Endothelial cell of umbilical vein (primary cell): ENCODE measurements at regions of chr2 and their contacts with region 1.

Region 1: GRCh38 chr2:20452551-20452950 is 5.7 kb downstream of the RHOB start:
- DNase-seq: no peak
- H3K4me3 ChIP-seq: no peak overlapping the region
- H3K27ac ChIP-seq: peak overlapping the region; percentile 76
- H3K4me1 ChIP-seq: no peaks in the 10 kb centered on the region
- H3K27me3 ChIP-seq: no peaks in the 10 kb centered on the region
- CTCF ChIP-seq: peak; percentile 29 to 36
- POLR2A ChIP-seq: no peak

Region 2: GRCh38 chr2:20561701-20562454 is 109.3 kb after region 1 on chr2:
- CTCF ChIA-PET with region 1: interaction called, 15 read pairs
- POLR2A ChIA-PET with region 1: interaction called, 11 read pairs
- dilution Hi-C with region 1: no loop called
- intact Hi-C with region 1: no loop called
- DNase-seq: peak; percentile 58
- H3K4me3 ChIP-seq: no peak overlapping the region
- H3K27ac ChIP-seq: no peak overlapping the region
- H3K4me1 ChIP-seq: peaks cover 12% of the 10 kb centered on the region
- H3K27me3 ChIP-seq: no peaks in the 10 kb centered on the region
- CTCF ChIP-seq: no peak
- POLR2A ChIP-seq: no peak

Region 3: DNA sequence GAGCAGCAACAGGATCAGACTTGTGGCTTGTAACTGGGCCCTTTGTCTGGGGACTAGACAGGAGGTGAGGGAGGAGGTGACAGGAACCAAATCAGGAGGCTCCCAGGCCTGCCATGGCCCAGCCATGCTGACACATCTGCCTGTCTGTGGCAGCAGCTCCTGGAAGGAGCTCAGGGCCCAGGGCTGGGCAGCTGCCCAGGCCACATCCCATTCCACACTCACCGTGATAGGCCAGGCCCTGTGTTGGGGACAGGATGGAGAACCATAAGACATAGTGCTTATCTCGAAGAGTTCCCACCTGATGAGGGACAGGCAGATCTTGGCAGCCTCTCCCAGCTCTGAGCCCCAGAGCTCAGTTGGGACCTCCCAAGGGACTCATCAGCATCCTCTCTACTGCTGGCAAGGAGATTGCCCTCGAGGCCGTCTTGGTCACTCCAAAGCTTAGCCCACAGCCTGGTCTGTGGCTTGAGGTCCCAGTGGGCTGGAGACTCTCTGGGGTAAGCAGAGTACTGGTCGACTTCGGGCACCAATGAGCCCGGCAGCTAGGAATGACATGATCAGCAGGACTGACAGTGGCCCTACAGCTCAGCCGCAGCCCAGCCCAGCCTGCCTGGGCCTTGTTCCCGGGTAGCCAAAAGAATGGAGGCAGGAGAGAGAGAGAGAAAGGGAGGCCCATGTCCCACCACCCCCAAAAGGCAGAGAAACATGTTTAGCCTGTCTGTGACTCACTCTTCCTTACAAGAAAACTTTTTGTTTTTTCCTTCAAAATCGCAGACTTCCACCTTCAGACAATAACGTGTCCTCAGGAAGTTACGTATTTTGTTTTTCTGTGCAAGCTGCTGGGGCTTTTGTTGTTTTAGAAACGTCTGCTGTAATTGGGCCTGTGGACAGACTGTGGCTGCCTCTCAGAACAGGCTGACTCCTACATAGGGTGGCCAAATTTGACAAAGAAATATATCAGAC is 116.2 kb after region 1 on chr2:
- CTCF ChIA-PET with region 1: interaction called, 78 read pairs
- POLR2A ChIA-PET with region 1: interaction called, 310 read pairs
- dilution Hi-C with region 1: no loop called
- intact Hi-C with region 1: loop called (anchors 1 kb)
- DNase-seq: peak; percentile 98
- H3K4me3 ChIP-seq: no peak overlapping the region
- H3K27ac ChIP-seq: peak overlapping the region; percentile 100
- H3K4me1 ChIP-seq: peaks cover 72% of the 10 kb centered on the region
- H3K27me3 ChIP-seq: no peaks in the 10 kb centered on the region
- CTCF ChIP-seq: no peak
- POLR2A ChIP-seq: peak; percentile 72

Region 4: DNA sequence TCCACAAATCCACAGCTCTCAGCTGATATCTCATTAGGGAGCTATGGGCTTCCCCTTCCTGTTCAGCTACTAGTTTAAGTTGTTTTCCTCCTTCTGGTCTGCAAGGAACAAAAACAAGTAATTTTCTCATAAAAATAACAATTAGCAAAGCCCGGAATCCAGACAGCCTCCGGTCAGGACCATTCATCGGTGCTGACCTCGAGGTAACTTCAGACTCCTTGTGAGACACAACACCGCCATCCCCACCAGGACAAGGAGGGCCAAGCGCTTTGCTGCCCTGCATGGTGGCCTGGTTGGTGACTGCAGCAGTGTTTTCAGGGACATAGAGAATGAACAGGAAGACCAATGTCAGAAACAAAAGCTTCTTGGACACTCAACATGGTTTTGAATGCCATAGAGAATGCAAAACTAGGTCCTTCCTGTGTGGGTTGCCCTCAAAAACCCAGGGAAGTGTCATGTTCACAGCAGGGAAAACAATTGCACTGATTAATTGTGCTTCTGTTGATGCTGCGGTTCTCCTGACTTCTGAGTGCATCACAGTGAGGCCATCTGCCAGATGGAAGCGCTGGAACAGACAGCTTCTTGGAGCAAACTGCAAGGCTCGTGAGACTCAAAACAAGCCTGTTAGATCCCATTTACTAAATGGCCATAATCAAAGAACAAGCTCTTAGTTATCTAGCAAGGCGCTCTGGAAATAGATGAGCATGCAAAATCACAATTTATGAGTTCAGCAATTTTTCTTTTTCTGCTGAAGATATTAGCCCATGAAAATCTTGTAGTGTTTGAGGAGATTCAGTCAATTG is 121.3 kb after region 1 on chr2:
- CTCF ChIA-PET with region 1: interaction called, 78 read pairs
- POLR2A ChIA-PET with region 1: interaction called, 310 read pairs
- dilution Hi-C with region 1: no loop called
- intact Hi-C with region 1: loop called (anchors 1 kb)
- DNase-seq: peak; percentile 98
- H3K4me3 ChIP-seq: no peak overlapping the region
- H3K27ac ChIP-seq: peak overlapping the region; percentile 100
- H3K4me1 ChIP-seq: peaks cover 98% of the 10 kb centered on the region
- H3K27me3 ChIP-seq: no peaks in the 10 kb centered on the region
- CTCF ChIP-seq: no peak
- POLR2A ChIP-seq: no peak

Region 5: GRCh38 chr2:20595431-20596192 is 143.1 kb after region 1 on chr2:
- CTCF ChIA-PET with region 1: interaction called, 30 read pairs
- POLR2A ChIA-PET with region 1: interaction called, 38 read pairs
- dilution Hi-C with region 1: no loop called
- intact Hi-C with region 1: loop called (anchors 1 kb)
- DNase-seq: peak; percentile 65
- H3K4me3 ChIP-seq: no peak overlapping the region
- H3K27ac ChIP-seq: peak overlapping the region; percentile 95
- H3K4me1 ChIP-seq: peaks cover 56% of the 10 kb centered on the region
- H3K27me3 ChIP-seq: no peaks in the 10 kb centered on the region
- CTCF ChIP-seq: no peak
- POLR2A ChIP-seq: peak; percentile 43

Region 6: GRCh38 chr2:20600756-20601325 is 148.3 kb after region 1 on chr2:
- CTCF ChIA-PET with region 1: interaction called, 30 read pairs
- POLR2A ChIA-PET with region 1: interaction called, 38 read pairs
- dilution Hi-C with region 1: no loop called
- intact Hi-C with region 1: loop called (anchors 1 kb)
- DNase-seq: peak; percentile 71
- H3K4me3 ChIP-seq: no peak overlapping the region
- H3K27ac ChIP-seq: peak overlapping the region; percentile 35
- H3K4me1 ChIP-seq: peaks cover 44% of the 10 kb centered on the region
- H3K27me3 ChIP-seq: no peaks in the 10 kb centered on the region
- CTCF ChIP-seq: peak in 1 of 2 donors; percentile 16
- POLR2A ChIP-seq: no peak

Region 7: DNA sequence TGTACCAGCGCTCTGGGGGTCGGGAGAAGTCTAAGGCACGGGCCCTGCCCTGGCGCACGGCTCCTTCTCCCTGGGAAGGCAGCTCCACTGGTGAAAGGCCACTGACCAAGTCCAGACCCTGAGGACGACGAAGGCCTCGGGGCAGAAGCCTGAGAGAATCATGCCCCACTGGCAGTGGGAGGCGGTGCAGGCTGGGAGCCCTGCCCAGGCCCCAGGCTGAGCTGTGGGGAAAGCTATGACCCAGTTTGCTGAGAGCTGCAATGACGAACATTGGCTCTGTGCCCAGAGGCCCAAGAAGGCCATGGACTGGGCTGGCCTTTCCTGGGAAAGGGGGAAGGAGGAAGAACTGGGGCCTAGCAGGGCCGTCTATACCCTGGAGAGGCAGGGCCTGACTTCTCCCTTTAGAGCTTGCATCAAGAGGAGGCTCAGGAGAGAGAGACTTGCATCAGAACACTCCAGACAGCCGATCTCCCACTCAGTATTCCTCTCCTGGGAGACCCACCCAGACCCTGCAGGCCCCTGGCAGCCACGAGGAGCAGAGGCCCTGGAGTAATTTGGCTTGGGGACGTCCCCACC is 165.4 kb after region 1 on chr2:
- CTCF ChIA-PET with region 1: interaction called, 7 read pairs
- POLR2A ChIA-PET with region 1: interaction called, 67 read pairs
- dilution Hi-C with region 1: no loop called
- intact Hi-C with region 1: loop called (anchors 1 kb)
- DNase-seq: peak; percentile 98
- H3K4me3 ChIP-seq: no peak overlapping the region
- H3K27ac ChIP-seq: peak overlapping the region; percentile 77
- H3K4me1 ChIP-seq: peaks cover 34% of the 10 kb centered on the region
- H3K27me3 ChIP-seq: no peaks in the 10 kb centered on the region
- CTCF ChIP-seq: peak; percentile 34 to 67
- POLR2A ChIP-seq: no peak